ENCODE measurements at regions of chr19 and their contacts with region 1.

Region 1: GRCh38 chr19:18058208-18059030 is 28.3 kb downstream of the IL12RB1 start:
- DNase-seq: peak; percentile 80 to 87 (median 84)
- ATAC-seq: peak; percentile 96
- H3K4me3 ChIP-seq: no peak overlapping the region
- H3K4me1 ChIP-seq: peaks cover 3% of the 10 kb centered on the region
- CTCF ChIP-seq: peak; percentile 87

Region 2: GRCh38 chr19:18007044-18007916 is 51.1 kb before region 1 on chr19:
- intact Hi-C with region 1: loop called (anchors 2 to 5 kb)
- DNase-seq: peak; percentile 87 to 91 (median 90)
- ATAC-seq: peak; percentile 90
- H3K4me3 ChIP-seq: no peak overlapping the region
- H3K4me1 ChIP-seq: no peaks in the 10 kb centered on the region
- CTCF ChIP-seq: peak; percentile 99